Activated B cell treated with CpG ODN at 0.5 μM for 24 hours (primary cell): ENCODE measurements at regions of chr9 and their contacts with region 1.

Region 1: GRCh38 chr9:859251-859650 is 17.8 kb downstream of the DMRT1 start:
- DNase-seq: no peak
- ATAC-seq: peak; percentile 99
- H3K4me3 Mint-ChIP-seq: no peak overlapping the region
- H3K27ac Mint-ChIP-seq: no peak overlapping the region
- H3K4me1 Mint-ChIP-seq: peaks cover 15% of the 10 kb centered on the region
- H3K27me3 Mint-ChIP-seq: peaks cover 33% of the 10 kb centered on the region
- CTCF ChIP-seq: no peak

Region 2: GRCh38 chr9:792282-793260 is 66.7 kb before region 1 on chr9:
- CTCF ChIA-PET with region 1: no interaction called
- POLR2A ChIA-PET with region 1: no interaction called
- intact Hi-C with region 1: no loop called
- DNase-seq: no peak
- ATAC-seq: no peak
- H3K4me3 Mint-ChIP-seq: no peak overlapping the region
- H3K27ac Mint-ChIP-seq: no peak overlapping the region
- H3K4me1 Mint-ChIP-seq: no peaks in the 10 kb centered on the region
- H3K27me3 Mint-ChIP-seq: peaks cover 10% of the 10 kb centered on the region
- CTCF ChIP-seq: no peak

Region 3: DNA sequence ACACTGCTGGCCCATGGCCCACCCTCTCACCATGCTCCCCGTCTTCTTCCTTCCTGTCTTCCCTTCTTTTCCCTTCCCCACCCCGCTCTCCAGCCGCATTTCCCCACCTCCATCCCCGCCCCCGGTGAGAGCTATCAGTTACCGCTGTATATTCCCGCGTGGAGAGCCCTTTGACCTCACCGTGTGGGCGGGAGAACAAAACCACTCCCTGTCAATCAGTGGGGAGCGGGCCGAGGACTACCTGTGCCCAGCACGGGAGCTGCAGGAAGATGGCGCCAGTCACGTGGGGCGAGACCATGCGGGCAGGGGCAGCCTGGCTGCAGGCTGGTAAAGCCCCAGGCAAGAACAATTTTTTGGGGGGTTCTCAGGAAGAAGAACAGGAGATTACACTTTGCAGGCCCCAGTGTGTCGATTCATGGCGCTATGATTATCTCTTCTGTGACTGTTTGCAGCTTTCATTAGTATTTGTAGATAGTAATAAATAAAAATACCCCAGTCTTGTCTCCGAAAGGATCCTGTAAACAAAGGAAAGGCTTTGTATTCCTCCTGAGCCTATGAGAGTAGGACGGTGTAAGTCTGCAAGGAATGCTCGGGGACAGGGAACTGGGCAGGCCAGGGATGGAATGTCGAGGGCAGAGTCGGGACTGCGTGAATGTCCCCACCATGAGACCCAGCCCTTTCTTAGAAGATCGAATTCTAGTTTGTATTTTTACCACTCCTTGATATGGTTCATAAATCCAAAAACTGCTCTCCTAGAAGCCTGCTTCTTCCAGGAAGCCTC is 32.6 kb before region 1 on chr9:
- CTCF ChIA-PET with region 1: no interaction called
- POLR2A ChIA-PET with region 1: no interaction called
- intact Hi-C with region 1: no loop called
- DNase-seq: no peak
- ATAC-seq: no peak
- H3K4me3 Mint-ChIP-seq: no peak overlapping the region
- H3K27ac Mint-ChIP-seq: no peak overlapping the region
- H3K4me1 Mint-ChIP-seq: no peaks in the 10 kb centered on the region
- H3K27me3 Mint-ChIP-seq: peaks cover 7% of the 10 kb centered on the region
- CTCF ChIP-seq: no peak

Region 4: GRCh38 chr9:846852-847251 is 12.4 kb before region 1 on chr9:
- CTCF ChIA-PET with region 1: no interaction called
- POLR2A ChIA-PET with region 1: interaction called, 17 read pairs
- intact Hi-C with region 1: no loop called
- DNase-seq: no peak
- ATAC-seq: no peak
- H3K4me3 Mint-ChIP-seq: no peak overlapping the region
- H3K27ac Mint-ChIP-seq: no peak overlapping the region
- H3K4me1 Mint-ChIP-seq: no peaks in the 10 kb centered on the region
- H3K27me3 Mint-ChIP-seq: peaks cover 47% of the 10 kb centered on the region
- CTCF ChIP-seq: no peak

Region 5: DNA sequence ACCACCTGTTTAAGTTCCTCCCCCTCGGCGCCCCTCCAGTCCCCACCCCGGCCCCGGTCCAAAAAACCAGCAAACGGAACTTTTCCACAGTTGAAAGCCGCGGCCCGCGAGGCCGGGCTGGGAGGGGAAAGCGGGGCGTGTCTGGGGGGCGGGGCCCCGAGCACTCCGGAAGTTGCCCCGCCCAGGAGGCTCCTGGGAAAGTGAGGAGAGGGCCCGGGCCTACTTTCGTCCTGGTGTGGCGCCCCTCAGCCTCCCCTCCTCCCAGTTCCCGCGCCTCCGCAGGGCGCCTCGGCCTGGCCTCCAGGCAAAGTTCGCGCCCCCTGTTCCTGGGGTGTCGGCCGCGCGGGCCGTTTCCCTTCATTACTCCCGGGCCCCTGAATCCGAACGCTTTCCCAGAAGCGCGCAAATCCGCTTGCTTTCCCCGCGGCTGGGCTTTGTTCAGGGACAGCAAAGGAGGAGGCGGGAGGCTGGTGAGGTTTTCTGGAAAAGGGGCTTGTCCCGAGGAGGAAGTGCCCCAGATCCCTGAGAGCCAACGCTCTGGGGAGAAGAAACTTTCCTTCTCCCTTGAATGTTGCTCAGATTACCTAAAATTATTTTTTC is 112.8 kb after region 1 on chr9:
- CTCF ChIA-PET with region 1: no interaction called
- POLR2A ChIA-PET with region 1: no interaction called
- intact Hi-C with region 1: no loop called
- DNase-seq: no peak
- ATAC-seq: no peak
- H3K4me3 Mint-ChIP-seq: no peak overlapping the region
- H3K27ac Mint-ChIP-seq: no peak overlapping the region
- H3K4me1 Mint-ChIP-seq: peaks cover 10% of the 10 kb centered on the region
- H3K27me3 Mint-ChIP-seq: peaks cover 58% of the 10 kb centered on the region
- CTCF ChIP-seq: no peak